ENCODE measurements at regions of chr12 and their contacts with region 1.

Region 1: GRCh38 chr12:69157023-69157655 is 82.2 kb upstream of the CPSF6 start:
- DNase-seq: peak; percentile 95
- H3K4me3 ChIP-seq: no peak overlapping the region
- H3K27ac ChIP-seq: no peak overlapping the region
- H3K4me1 ChIP-seq: no peaks in the 10 kb centered on the region
- H3K27me3 ChIP-seq: no peaks in the 10 kb centered on the region
- CTCF ChIP-seq: peak; percentile 98

Region 2: GRCh38 chr12:68899251-68899771 is 257.8 kb before region 1 on chr12:
- intact Hi-C with region 1: loop called (anchors 5 kb)
- DNase-seq: peak; percentile 74
- H3K4me3 ChIP-seq: no peak overlapping the region
- H3K27ac ChIP-seq: no peak overlapping the region
- H3K4me1 ChIP-seq: no peaks in the 10 kb centered on the region
- H3K27me3 ChIP-seq: no peaks in the 10 kb centered on the region
- CTCF ChIP-seq: peak; percentile 58

Region 3: DNA sequence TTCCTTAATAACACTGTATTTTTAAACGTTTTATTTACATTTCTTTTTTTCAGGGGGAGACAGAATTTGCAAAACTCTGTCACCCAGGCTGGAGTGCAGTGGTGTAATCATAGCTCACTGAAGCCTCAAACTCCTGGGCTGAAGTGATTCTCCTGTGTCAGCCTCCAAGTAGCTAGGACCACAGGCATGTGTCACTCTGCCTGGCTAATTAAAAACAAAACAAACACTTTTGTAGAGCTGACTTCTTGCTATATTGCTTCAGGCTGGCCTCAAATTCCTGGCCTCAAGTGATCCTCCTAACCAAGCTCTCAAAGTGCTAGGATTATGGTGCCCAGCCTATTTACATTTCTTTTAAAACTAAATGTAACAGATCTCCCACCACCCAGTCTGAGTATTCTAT is 94.9 kb after region 1 on chr12:
- intact Hi-C with region 1: loop called (anchors 2 kb)
- DNase-seq: no peak
- H3K4me3 ChIP-seq: no peak overlapping the region
- H3K27ac ChIP-seq: no peak overlapping the region
- H3K4me1 ChIP-seq: no peaks in the 10 kb centered on the region
- H3K27me3 ChIP-seq: no peaks in the 10 kb centered on the region
- CTCF ChIP-seq: no peak

Measured in colonic mucosa (tissue), 4 donors.